Sigmoid colon (tissue), 7 donors: ENCODE measurements at regions of chr5 and their contacts with region 1.

Region 1: DNA sequence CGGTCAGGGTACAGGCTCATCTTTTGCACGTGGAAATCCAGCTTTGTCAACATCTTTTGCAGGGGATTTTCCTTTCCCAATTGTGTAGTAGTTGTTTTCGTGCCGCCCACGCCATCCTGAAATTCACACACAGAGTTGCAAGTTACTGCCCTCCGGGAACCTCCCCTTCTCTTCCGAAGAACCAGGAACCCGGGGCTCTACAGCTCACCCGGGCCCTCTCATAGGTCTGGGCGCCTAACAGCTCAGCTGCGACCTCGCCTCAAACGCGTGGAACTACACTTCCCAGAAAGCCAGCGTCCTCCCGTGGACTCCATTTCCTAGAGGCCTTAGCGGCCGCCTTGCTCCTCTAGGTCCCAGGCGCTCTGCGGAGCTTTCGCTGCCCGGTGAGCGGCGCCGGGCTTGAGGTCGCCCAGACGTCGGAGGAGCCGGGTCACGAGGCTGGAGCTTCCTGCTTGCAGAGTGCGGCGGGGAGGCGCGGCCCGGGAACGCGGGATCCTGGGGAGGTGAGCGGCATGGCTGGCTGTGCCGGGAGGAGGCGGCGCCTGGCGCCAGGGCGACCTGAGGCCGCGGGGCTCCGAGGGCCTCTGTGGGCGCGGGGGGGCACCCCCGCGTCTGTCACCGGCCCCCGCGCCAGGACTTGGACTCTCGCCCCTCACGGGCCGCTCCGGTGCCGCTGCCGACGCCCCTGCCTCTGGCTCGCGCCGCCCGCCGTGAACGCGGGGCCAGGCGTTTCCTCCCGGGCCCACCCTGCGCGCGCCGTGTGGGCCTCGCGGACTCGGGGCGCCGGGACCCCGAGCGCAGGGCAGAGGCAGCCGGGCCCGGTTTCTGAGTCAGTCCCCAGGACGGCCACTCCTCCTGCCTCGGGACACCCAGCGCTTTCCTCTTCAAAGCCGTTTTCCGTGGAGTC is at the start of gene ZNF354B:
- DNase-seq: peak; percentile 94
- H3K4me3 ChIP-seq: peak within 1 kb of the TSS; percentile 63 to 98 (median 78)
- H3K27ac ChIP-seq: peak within 1 kb of the TSS; percentile 86 to 92 (median 87)
- H3K4me1 ChIP-seq: peaks cover 0 to 21% (median 14%) of the 10 kb centered on the region in 4 donors
- H3K27me3 ChIP-seq: no peaks in the 10 kb centered on the region
- CTCF ChIP-seq: no peak
- EP300 ChIP-seq: no peak
- POLR2A ChIP-seq: peak; percentile 34 to 42
- total RNA-seq, gene ZNF354B: 13.3 to 23.5 (median 18.6) TPM

Region 2: GRCh38 chr5:179023528-179024430 is 163.9 kb after region 1 on chr5 and contains the start of gene ZNF879:
- intact Hi-C with region 1: loop called (anchors 10 kb)
- DNase-seq: peak; percentile 97
- H3K4me3 ChIP-seq: peak within 1 kb of the TSS; percentile 43 to 97 (median 86)
- H3K27ac ChIP-seq: peak within 1 kb of the TSS; percentile 84 to 89 (median 88)
- H3K4me1 ChIP-seq: peaks cover 0 to 11% (median 8%) of the 10 kb centered on the region in 4 donors
- H3K27me3 ChIP-seq: no peaks in the 10 kb centered on the region
- CTCF ChIP-seq: no peak
- EP300 ChIP-seq: no peak
- POLR2A ChIP-seq: no peak
- total RNA-seq, gene ZNF879: 2.8 to 6.3 (median 4.7) TPM